Activated CD4-positive, alpha-beta T cell treated with anti-CD3 and anti-CD28 coated beads for 36 hours (primary cell): ENCODE measurements at regions of chr7 and their contacts with region 1.

Region 1: DNA sequence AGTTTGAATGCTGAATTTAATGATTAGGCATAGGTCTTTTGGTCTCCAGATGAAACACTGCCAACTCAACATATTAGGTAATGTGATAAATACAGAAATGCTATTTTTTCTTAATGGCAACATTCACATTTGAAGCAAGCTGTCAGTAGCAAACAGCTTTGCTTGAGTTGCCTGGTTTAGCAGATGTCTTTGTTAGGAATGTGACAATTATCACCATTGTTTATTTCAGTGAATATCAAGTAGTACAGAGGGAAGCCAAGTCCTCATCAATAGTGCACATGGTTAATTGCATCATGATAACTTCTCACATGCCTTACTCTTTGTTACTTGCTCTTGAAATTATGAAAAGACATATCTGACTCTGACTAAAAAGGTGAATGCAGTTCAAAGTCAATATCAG is 23.7 kb upstream of the SEPTIN7 start:
- DNase-seq: no peak
- ATAC-seq: no peak
- H3K4me3 Mint-ChIP-seq: no peak overlapping the region
- H3K27ac Mint-ChIP-seq: no peak overlapping the region
- H3K4me1 Mint-ChIP-seq: no peaks in the 10 kb centered on the region
- H3K27me3 Mint-ChIP-seq: no peaks in the 10 kb centered on the region

Region 2: DNA sequence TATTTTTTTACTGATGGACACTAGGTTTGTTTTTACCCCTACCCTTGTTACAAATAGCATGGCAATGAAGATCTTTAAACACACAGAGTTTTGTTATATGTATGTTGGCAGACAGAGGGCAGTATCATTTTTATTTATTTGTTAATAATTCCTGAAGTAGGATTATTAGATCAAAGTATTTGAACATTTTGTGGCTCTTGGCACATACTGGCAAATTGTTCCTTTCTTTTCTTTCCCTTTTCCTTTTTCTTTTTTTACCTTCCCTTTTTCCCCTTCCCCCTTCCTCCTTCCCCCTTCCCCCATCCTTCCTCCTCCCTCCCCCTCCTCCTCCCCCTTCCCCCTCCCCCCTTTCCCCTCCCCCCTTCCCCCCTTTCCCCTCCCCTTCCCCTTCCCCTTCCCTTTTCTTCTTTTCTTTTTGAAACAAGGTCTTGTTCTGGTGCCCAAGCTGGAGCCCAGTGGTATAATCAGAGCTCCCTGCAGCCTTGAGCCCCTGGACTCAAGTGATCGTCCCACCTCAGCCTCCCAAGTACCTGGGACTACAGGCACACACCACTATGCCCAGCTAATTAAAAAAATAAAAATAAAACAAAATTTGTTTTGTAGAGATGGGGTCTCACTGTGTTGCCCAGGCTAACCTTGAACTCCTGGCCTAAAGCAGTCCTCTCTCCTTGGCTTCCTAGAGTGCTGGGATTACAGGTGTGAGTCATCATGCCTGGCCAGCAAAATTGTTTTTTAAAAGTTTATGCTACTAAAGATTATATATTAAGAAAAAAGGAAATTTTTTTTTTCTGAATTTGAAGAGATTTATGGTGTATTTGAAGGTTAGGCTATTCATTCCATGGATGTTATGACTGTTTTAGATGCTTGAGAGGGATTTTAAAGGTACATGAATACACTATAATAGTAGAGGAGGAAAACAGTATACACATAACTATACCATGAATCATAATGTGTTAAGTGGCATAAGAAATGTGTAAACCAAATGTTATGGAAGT is 63.0 kb after region 1 on chr7:
- CTCF ChIA-PET with region 1: no interaction called
- POLR2A ChIA-PET with region 1: no interaction called
- intact Hi-C with region 1: loop called in 1 of 2 experiments (anchors 10 kb)
- DNase-seq: no peak
- ATAC-seq: peak; percentile 78
- H3K4me3 Mint-ChIP-seq: no peak overlapping the region
- H3K27ac Mint-ChIP-seq: no peak overlapping the region
- H3K4me1 Mint-ChIP-seq: peaks cover 43% of the 10 kb centered on the region
- H3K27me3 Mint-ChIP-seq: no peaks in the 10 kb centered on the region